ENCODE measurements at regions of chr19 and their contacts with region 1.

Region 1: GRCh38 chr19:42032431-42032830 is 37.6 kb downstream of the GRIK5 start:
- DNase-seq: peak; percentile 80
- ATAC-seq: peak; percentile 56
- H3K4me3 ChIP-seq: no peak overlapping the region
- H3K27ac ChIP-seq: peak overlapping the region; percentile 28; the same call in 1 of the 2 replicates
- H3K4me1 ChIP-seq: peaks cover 11% of the 10 kb centered on the region; the same call in 1 of the 2 replicates
- H3K27me3 ChIP-seq: no peaks in the 10 kb centered on the region
- CTCF ChIP-seq: no peak

Region 2: GRCh38 chr19:41997121-41997850 is 35.1 kb before region 1 on chr19:
- CTCF ChIA-PET with region 1: no interaction called
- POLR2A ChIA-PET with region 1: no interaction called
- intact Hi-C with region 1: loop called (anchors 2 kb)
- DNase-seq: peak; percentile 42
- ATAC-seq: peak; percentile 65; the same call in 1 of the 2 replicates
- H3K4me3 ChIP-seq: no peak overlapping the region
- H3K27ac ChIP-seq: no peak overlapping the region
- H3K4me1 ChIP-seq: no peaks in the 10 kb centered on the region
- H3K27me3 ChIP-seq: peaks cover 35% of the 10 kb centered on the region
- CTCF ChIP-seq: no peak

Region 3: GRCh38 chr19:42018503-42019193 is 13.8 kb before region 1 on chr19:
- CTCF ChIA-PET with region 1: interaction called, 5 read pairs
- POLR2A ChIA-PET with region 1: interaction called, 19 read pairs
- intact Hi-C with region 1: no loop called
- DNase-seq: peak; percentile 23
- ATAC-seq: no peak
- H3K4me3 ChIP-seq: no peak overlapping the region
- H3K27ac ChIP-seq: no peak overlapping the region
- H3K4me1 ChIP-seq: peaks cover 14% of the 10 kb centered on the region
- H3K27me3 ChIP-seq: no peaks in the 10 kb centered on the region
- CTCF ChIP-seq: no peak

Measured in PC-3 (cell line).